A549 (cell line): ENCODE measurements at regions of chr14 and their contacts with region 1.

Region 1: GRCh38 chr14:76918751-76919543 is 92.7 kb downstream of the LRRC74A start:
- DNase-seq: peak; percentile 95 to 96
- ATAC-seq: peak; percentile 80 to 85
- H3K4me3 ChIP-seq: no peak overlapping the region
- H3K27ac ChIP-seq: peak overlapping the region; percentile 96 to 99
- H3K4me1 ChIP-seq: peaks cover 82% of the 10 kb centered on the region
- CTCF ChIP-seq: no peak
- EP300 ChIP-seq: peak; percentile 66 to 79; a peak in 3 of 5 replicates
- POLR2A ChIP-seq: no peak
- RAD21 ChIP-seq: peak; percentile 3 to 44; a peak in 2 of 5 replicates

Region 2: DNA sequence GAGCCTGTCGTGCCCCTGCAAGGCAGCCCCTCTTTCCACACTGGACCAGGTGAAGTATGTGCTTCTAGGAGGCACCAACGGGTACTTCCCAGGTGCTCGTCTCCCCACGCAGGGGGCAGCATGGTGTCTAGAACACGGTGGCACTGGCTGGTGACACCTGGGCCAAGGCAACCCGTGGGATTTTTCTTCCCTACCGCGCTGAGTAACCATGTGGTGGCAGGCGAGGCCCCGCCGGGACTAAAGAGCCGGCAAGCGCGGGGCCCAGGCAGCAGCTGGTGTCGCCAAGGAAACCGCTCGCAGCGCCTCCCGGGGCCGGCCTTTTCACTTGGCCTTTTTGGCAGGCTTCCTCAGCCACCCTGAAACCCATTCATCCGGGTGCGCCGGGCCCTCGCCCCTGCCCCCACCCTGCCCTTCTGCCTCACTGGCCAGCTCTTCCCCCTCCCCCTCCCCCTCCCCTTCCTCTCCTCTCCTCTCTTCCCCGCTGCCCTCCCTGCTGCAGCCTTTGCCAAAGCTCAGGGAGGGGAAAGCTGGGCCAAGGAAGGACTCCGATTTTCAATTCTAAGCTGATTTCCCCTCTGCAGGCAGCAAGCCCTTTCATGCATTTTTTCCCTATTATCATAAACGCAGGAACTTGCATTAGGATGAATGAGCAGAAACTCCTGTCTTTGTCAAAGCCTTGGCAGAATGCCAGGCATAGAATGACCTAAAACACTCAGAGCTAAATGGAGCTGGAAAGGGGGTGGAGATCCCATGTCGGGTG is 28.3 kb after region 1 on chr14:
- CTCF ChIA-PET with region 1: interaction called, 678 read pairs
- POLR2A ChIA-PET with region 1: interaction called, 43 read pairs
- DNase-seq: peak; percentile 90 to 95
- ATAC-seq: peak; percentile 88 to 89
- H3K4me3 ChIP-seq: no peak overlapping the region
- H3K27ac ChIP-seq: peak overlapping the region; percentile 96 to 100
- H3K4me1 ChIP-seq: peaks cover 71% of the 10 kb centered on the region
- CTCF ChIP-seq: peak; percentile 56; the same call in 2 of the 3 replicates
- EP300 ChIP-seq: peak in 1 of 2 experiments; percentile 59; a peak in 1 of 5 replicates
- POLR2A ChIP-seq: no peak
- RAD21 ChIP-seq: peak; percentile 61 to 82

Region 3: GRCh38 chr14:76968621-76969063 is 49.7 kb after region 1 on chr14:
- CTCF ChIA-PET with region 1: interaction called, 29 read pairs
- POLR2A ChIA-PET with region 1: interaction called, 4 read pairs
- DNase-seq: no peak
- ATAC-seq: no peak; a peak in 1 of 6 replicates
- H3K4me3 ChIP-seq: no peak overlapping the region
- H3K27ac ChIP-seq: peak overlapping the region in 1 of 2 experiments; percentile 29; a peak in 1 of 6 replicates
- H3K4me1 ChIP-seq: no peaks in the 10 kb centered on the region
- CTCF ChIP-seq: no peak
- EP300 ChIP-seq: no peak
- POLR2A ChIP-seq: no peak
- RAD21 ChIP-seq: no peak

Region 4: GRCh38 chr14:77028384-77029231 is 109.7 kb after region 1 on chr14 and contains the start of gene IRF2BPL:
- CTCF ChIA-PET with region 1: interaction called, 144 read pairs
- POLR2A ChIA-PET with region 1: interaction called, 78 read pairs
- DNase-seq: peak; percentile 94 to 99
- ATAC-seq: peak; percentile 46 to 48
- H3K4me3 ChIP-seq: peak within 1 kb of the TSS; percentile 78
- H3K27ac ChIP-seq: peak within 1 kb of the TSS; percentile 95 to 99
- H3K4me1 ChIP-seq: peaks cover 49% of the 10 kb centered on the region
- CTCF ChIP-seq: no peak
- EP300 ChIP-seq: peak; percentile 83 to 94
- POLR2A ChIP-seq: peak; percentile 86
- RAD21 ChIP-seq: peak; percentile 31 to 61; a peak in 4 of 5 replicates
- polyA plus RNA-seq, gene IRF2BPL: 12.5 and 18.1 TPM in 2 replicates

Region 5: DNA sequence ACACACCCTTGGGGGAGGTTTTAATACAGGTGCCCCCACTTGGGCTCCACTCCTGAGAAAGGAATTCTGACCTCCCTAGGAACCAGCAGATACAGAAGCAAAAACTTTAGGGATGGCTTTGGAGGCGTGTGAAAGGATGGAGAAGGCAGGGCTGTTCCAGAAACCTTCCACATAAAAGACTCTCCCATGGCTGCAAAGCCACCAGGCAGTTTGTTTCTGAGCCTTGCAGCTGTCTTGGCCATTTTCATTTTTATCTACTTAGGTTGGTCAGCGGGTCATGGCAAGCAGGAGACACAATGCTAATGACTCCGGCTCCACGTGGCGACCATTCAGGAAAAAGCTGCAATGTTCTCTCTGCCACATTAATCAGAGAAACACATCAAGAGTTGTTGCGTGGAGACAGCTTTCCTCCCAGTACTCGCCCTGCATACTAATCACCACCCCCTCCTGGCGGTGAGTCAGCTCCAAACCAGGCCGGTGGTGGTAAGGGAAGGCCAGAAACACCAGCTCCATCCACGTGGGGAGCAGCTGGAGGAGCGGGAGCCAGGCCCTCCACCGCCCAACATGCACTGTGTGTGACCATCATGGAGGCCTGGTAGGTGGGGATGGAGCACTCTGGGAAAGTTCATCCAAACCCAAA is 140.4 kb after region 1 on chr14:
- CTCF ChIA-PET with region 1: interaction called, 676 read pairs
- POLR2A ChIA-PET with region 1: no interaction called
- DNase-seq: peak; percentile 51 to 66
- ATAC-seq: peak; percentile 87 to 93
- H3K4me3 ChIP-seq: no peak overlapping the region
- H3K27ac ChIP-seq: peak overlapping the region; percentile 31 to 77; a peak in 4 of 6 replicates
- H3K4me1 ChIP-seq: peaks cover 11% of the 10 kb centered on the region; the same call in 2 of the 3 replicates
- CTCF ChIP-seq: no peak
- EP300 ChIP-seq: no peak
- POLR2A ChIP-seq: no peak
- RAD21 ChIP-seq: peak; percentile 35 to 54; a peak in 3 of 5 replicates

Region 6: GRCh38 chr14:77097700-77098528 is 179.0 kb after region 1 on chr14 and contains the start of gene CIPC:
- CTCF ChIA-PET with region 1: interaction called, 30 read pairs
- POLR2A ChIA-PET with region 1: no interaction called
- DNase-seq: peak; percentile 97 to 99
- ATAC-seq: peak; percentile 91 to 96
- H3K4me3 ChIP-seq: peak within 1 kb of the TSS; percentile 92
- H3K27ac ChIP-seq: peak within 1 kb of the TSS; percentile 94 to 96
- H3K4me1 ChIP-seq: peaks cover 19% of the 10 kb centered on the region
- CTCF ChIP-seq: no peak
- EP300 ChIP-seq: peak in 1 of 2 experiments; percentile 35; a peak in 1 of 5 replicates
- POLR2A ChIP-seq: peak; percentile 87
- RAD21 ChIP-seq: no peak
- polyA plus RNA-seq, gene CIPC: 13.9 and 15.2 TPM in 2 replicates

Region 7: GRCh38 chr14:77181603-77182437 is 262.9 kb after region 1 on chr14 and contains the start of gene TMEM63C:
- CTCF ChIA-PET with region 1: no interaction called
- POLR2A ChIA-PET with region 1: no interaction called
- DNase-seq: peak; percentile 78 to 88
- ATAC-seq: peak; percentile 95
- H3K4me3 ChIP-seq: peak within 1 kb of the TSS; percentile 66
- H3K27ac ChIP-seq: peak within 1 kb of the TSS; percentile 31 to 78
- H3K4me1 ChIP-seq: peaks cover 12% of the 10 kb centered on the region; the same call in 2 of the 3 replicates
- CTCF ChIP-seq: no peak
- EP300 ChIP-seq: no peak
- POLR2A ChIP-seq: no peak
- RAD21 ChIP-seq: no peak
- polyA plus RNA-seq, gene TMEM63C: 0.57 and 0.86 TPM in 2 replicates

Region 8: GRCh38 chr14:77421201-77421600 is 502.3 kb after region 1 on chr14:
- CTCF ChIA-PET with region 1: no interaction called
- POLR2A ChIA-PET with region 1: no interaction called
- DNase-seq: no peak
- ATAC-seq: no peak
- H3K4me3 ChIP-seq: no peak overlapping the region
- H3K27ac ChIP-seq: no peak overlapping the region
- H3K4me1 ChIP-seq: no peaks in the 10 kb centered on the region
- CTCF ChIP-seq: no peak
- EP300 ChIP-seq: no peak
- POLR2A ChIP-seq: no peak
- RAD21 ChIP-seq: no peak